Left cardiac atrium (tissue), 4 donors: ENCODE measurements at regions of chr6 and their contacts with region 1.

Region 1: DNA sequence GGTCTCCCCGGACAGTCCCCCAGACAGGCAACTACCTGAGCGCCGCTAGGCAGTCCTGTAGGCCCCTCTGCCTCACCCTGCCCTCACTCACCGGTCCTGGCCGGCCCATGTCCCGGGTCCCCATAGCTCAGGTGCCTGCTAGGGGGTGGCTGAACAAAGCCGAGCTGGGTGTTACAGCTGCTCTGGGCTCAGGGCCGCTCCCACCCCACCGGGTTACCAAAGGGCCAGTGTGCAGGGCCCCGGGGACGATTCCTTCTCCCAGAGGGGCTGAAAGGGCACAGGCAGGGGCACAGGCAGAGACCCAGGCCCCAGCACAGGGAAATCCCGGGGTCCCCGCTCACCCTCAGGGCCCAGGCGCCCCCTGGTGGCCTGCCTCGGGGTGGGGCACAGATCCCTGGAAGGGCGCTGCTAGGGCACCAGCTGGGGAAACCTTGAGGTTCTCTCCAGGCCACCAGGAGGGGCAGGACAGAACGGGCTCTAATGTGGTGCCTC is 118.4 kb downstream of the GRM4 start:
- DNase-seq: peak; percentile 42
- ATAC-seq: peak; percentile 55 to 62

Region 2: DNA sequence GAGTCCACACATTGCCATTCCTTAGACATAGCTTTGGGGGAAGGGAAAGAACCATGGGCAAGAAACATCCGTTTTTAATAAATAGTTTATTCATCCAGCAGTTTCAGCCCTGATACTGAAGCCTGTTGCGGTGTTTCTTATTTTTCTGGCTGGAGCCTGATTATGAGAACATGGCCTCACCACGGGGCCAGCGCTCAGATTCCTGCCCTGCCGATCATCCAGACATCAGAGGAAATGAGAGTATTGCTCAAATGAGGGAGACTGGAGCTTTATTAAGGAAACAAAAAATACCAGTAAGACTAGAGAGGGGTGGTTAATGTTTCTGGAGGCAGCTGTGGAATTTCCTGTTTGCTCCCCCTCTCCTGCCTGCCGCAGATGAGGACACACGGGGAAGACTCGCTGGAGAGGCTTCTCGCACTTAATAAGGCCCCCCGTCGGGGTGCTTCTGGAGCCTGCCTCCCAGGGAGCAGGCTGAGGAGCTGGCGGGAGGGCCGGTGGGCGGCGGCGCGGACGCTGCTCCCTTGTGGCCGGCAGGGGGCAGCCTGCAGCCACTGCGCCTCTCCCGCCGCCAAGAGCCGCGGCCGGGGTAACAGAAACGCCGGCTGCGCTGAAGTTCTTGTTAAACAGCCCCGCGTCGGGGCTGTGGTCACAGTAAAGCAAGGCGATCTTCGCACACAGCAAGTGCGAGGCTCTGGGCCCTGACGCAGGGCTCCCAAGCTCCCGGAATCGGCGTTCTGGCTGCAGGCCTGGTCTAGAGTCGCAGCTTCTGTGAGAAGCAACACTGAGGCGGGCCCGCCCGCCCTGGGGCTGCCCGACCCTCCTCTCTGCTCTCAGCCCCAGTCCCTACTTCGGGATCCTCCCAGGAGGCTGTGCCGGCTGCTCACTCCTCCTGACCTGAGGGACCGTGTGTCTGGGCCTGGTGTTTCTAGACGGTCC is 256.1 kb before region 1 on chr6:
- intact Hi-C with region 1: loop called (anchors 2 to 10 kb)
- DNase-seq: peak; percentile 80
- ATAC-seq: peak; percentile 84

Region 3: DNA sequence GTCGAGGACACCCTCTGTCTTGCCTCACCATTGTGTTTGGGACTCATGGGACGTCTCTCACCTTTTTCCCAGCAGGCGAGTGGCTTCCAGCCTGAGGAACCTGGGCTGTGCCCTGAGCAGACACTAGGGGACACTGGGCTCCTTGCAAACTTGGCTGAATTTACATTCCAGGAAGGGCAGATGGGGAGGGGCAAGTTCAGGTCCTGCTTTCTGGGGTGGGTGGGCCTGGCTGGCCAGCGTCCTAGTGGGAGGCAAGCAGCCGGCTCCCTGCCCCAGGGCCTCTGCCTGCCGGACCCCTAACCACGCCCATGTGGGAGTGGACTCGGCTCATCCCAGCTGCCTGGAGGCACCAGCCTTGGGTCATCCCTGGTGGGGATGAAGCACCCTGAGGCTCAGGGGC is 175.5 kb before region 1 on chr6:
- intact Hi-C with region 1: loop called in 1 of 2 experiments (anchors 10 kb)
- DNase-seq: no peak
- ATAC-seq: peak; percentile 36 to 68